Activated naive CD4-positive, alpha-beta T cell treated with anti-CD3 and anti-CD28 coated beads for 36 hours (primary cell): ENCODE measurements at regions of chr1 and their contacts with region 1.

Region 1: GRCh38 chr1:84996846-84997666 is at the start of gene MCOLN2:
- DNase-seq: peak; percentile 43
- H3K4me3 Mint-ChIP-seq: peak within 1 kb of the TSS; percentile 79
- H3K27ac Mint-ChIP-seq: peak within 1 kb of the TSS; percentile 80
- H3K4me1 Mint-ChIP-seq: peaks cover 40% of the 10 kb centered on the region
- H3K27me3 Mint-ChIP-seq: peaks cover 17% of the 10 kb centered on the region
- total RNA-seq, gene MCOLN2: 7.4 to 8.4 TPM

Region 2: DNA sequence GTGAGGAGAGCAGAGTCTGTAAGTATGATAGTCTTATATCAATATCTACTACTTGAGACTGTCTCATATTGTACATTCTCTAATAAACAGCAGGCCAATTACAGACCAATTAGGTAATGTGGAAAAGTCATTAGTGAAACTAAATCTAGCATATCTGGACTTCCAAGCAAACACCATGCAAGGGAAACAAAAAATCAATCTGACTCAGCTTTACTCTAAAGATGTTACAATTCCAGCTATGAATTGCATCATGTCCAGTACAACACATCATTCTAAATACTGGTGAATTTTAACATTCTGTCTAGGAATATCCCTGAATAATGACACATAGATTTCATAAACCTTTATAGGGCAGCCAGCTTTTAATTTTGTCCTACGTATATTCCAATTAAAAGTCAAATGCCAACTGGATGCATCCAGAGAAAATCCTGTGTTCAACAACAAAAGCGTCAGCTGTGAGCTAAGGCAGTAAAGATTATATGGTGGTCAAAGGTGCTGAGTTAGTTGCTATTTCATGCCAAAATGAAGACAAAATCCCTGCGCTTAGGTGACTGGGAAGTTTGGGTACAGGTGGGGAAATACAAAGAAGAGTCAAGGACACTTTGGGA is 1157.4 kb before region 1 on chr1:
- CTCF ChIA-PET with region 1: no interaction called
- intact Hi-C with region 1: no loop called
- DNase-seq: no peak
- H3K4me3 Mint-ChIP-seq: no peak overlapping the region
- H3K27ac Mint-ChIP-seq: no peak overlapping the region
- H3K4me1 Mint-ChIP-seq: no peaks in the 10 kb centered on the region
- H3K27me3 Mint-ChIP-seq: no peaks in the 10 kb centered on the region

Region 3: GRCh38 chr1:84853741-84854721 is 143.0 kb before region 1 on chr1:
- CTCF ChIA-PET with region 1: interaction called, 3 read pairs
- intact Hi-C with region 1: loop called (anchors 2 kb)
- DNase-seq: peak; percentile 64
- H3K4me3 Mint-ChIP-seq: no peak overlapping the region
- H3K27ac Mint-ChIP-seq: peak overlapping the region; percentile 80
- H3K4me1 Mint-ChIP-seq: peaks cover 35% of the 10 kb centered on the region
- H3K27me3 Mint-ChIP-seq: no peaks in the 10 kb centered on the region

Region 4: DNA sequence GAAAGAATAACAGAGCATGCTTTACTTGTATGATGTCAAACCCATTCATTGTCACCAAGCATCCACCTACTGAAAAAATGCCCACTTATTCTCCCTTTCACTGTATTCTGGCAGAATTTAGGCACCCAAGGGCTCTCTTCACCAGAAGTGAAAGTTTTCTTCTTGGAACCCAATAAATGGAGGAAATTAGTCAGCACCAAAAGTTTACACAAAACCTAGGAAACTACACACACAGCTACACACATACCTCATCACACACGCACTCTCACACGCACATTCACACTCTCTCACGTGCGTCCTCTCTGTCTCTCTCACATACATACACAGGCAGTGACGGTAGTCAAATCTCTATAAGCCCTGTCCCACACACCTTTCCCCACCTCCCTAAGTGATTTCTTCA is 37.8 kb before region 1 on chr1:
- CTCF ChIA-PET with region 1: interaction called, 4 read pairs
- intact Hi-C with region 1: loop called (anchors 1 kb)
- DNase-seq: peak; percentile 62
- H3K4me3 Mint-ChIP-seq: no peak overlapping the region
- H3K27ac Mint-ChIP-seq: no peak overlapping the region
- H3K4me1 Mint-ChIP-seq: peaks cover 7% of the 10 kb centered on the region
- H3K27me3 Mint-ChIP-seq: no peaks in the 10 kb centered on the region

Region 5: DNA sequence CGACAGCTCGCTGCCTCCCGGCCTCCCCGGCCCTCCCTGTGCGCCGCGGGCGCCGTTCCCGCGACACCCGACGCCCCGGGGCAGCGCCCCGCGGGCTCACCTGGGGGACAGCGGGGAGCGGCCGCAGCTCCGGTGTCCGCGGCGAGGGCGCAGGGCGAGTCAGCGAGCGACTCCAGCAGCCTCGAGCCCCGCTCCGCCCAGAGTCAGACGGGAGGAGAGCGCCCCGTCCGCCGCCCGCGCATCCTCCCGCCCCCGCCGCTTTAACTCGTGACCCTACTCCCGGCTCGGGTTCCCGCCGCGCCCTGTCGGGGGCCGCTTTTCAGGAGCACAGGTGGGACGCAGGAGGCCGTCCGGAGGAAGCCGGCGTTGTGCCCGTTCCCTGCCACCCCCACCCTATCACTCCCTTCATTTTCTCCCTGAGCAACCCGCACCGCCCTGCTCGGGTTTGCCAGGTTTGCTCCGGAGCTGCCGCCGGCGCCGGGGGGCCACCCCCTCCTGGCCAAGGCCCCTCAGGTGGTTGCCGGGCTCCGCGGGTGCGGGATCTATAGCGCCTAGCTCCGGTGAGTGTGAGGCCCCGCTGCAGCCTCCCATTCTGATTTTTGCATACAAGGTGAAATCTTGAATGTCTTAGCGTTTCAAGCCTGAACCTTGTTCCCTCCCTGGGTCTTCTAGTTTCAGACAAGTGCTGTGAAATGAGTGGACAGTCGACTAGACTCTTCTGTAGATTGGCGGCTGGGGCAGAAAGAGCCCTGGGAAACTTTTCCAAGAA is 51.4 kb after region 1 on chr1 and contains the start of gene MCOLN3:
- CTCF ChIA-PET with region 1: no interaction called
- intact Hi-C with region 1: loop called (anchors 2 kb)
- DNase-seq: peak; percentile 52
- H3K4me3 Mint-ChIP-seq: peak within 1 kb of the TSS; percentile 68
- H3K27ac Mint-ChIP-seq: no peak within 1 kb of the TSS
- H3K4me1 Mint-ChIP-seq: peaks cover 18% of the 10 kb centered on the region
- H3K27me3 Mint-ChIP-seq: peaks cover 33% of the 10 kb centered on the region
- total RNA-seq, gene MCOLN3: 0.19 to 0.30 TPM

Region 6: GRCh38 chr1:85200870-85201339 is 203.8 kb after region 1 on chr1 and contains the start of gene SYDE2:
- CTCF ChIA-PET with region 1: no interaction called
- intact Hi-C with region 1: loop called (anchors 2 kb)
- DNase-seq: peak; percentile 76
- H3K4me3 Mint-ChIP-seq: peak within 1 kb of the TSS; percentile 98
- H3K27ac Mint-ChIP-seq: peak within 1 kb of the TSS; percentile 89
- H3K4me1 Mint-ChIP-seq: peaks cover 33% of the 10 kb centered on the region
- H3K27me3 Mint-ChIP-seq: no peaks in the 10 kb centered on the region
- total RNA-seq, gene SYDE2: 4.4 to 5.1 TPM

Region 7: GRCh38 chr1:85289207-85289847 is 292.3 kb after region 1 on chr1:
- CTCF ChIA-PET with region 1: no interaction called
- intact Hi-C with region 1: no loop called
- DNase-seq: peak; percentile 48
- H3K4me3 Mint-ChIP-seq: no peak overlapping the region
- H3K27ac Mint-ChIP-seq: no peak overlapping the region
- H3K4me1 Mint-ChIP-seq: peaks cover 7% of the 10 kb centered on the region
- H3K27me3 Mint-ChIP-seq: peaks cover 9% of the 10 kb centered on the region

Region 8: DNA sequence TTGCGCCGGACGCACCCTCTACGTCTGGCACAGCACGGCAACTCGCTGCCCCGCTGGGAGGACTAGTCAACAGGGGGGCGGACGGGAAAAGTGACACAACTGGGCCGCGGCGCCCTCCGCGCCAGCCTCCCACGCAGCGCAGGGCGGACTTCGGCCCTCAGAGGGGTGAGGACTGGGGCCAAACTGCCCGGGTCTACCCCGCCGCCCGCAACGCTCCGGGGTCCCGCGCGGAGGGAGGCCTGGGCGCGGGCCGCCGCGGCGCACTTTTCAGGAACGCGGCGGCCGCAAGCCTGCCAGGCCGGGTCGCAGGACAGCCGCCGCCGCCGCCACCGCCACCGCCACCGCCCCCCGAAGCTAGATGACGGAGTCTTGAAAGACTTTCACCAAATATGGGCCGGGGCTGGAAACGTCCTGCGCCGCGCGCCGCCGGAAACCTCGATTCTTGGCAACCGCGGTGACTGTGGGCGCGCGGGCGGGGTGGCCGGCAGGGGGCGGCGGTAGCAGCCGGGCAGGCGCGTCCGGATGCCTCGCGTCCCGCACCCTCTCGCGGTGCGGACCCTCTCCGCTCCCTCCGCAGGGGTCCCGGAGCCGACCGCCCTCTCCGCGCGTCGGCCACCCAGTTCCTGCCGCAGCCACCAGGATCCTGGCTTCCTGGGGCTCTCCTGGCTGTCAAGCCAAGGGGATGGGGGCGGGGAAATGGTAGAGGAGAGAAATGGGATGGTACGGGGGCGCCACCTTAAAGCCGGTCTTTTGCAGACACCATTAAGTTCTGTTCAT is 579.8 kb after region 1 on chr1:
- CTCF ChIA-PET with region 1: no interaction called
- intact Hi-C with region 1: loop called (anchors 2 kb)
- DNase-seq: peak; percentile 74
- H3K4me3 Mint-ChIP-seq: peak overlapping the region; percentile 63
- H3K27ac Mint-ChIP-seq: no peak overlapping the region
- H3K4me1 Mint-ChIP-seq: peaks cover 25% of the 10 kb centered on the region
- H3K27me3 Mint-ChIP-seq: peaks cover 74% of the 10 kb centered on the region